Breast epithelium (tissue), 4 donors: ENCODE measurements at regions of chr10 and their contacts with region 1.

Region 1: DNA sequence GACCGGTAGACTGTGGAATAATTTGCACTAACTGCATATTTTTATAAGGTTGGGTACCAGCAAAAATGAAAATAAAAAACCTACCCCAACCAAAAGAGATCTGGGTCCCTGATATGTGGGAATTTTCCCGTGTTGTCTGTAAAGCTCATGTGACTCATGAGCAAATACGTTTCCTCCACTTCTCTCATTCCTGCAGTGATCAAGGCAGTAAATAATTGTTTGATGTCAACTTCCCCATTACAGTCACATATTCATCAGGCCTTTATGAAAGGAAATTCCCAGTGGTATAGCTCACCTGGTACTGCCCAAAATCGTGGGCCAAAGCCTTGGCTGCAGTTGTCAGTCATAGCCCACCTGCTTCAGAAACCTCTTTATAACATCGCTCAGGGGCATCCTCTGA is 166.0 kb upstream of the ANK3 start:
- DNase-seq: no peak
- H3K4me3 ChIP-seq: no peak overlapping the region
- H3K27ac ChIP-seq: no peak overlapping the region
- H3K4me1 ChIP-seq: no peaks in the 10 kb centered on the region
- H3K27me3 ChIP-seq: no peaks in the 10 kb centered on the region
- CTCF ChIP-seq: no peak
- POLR2A ChIP-seq: no peak

Region 2: GRCh38 chr10:59967069-59967468 is 588.6 kb before region 1 on chr10:
- intact Hi-C with region 1: no loop called
- DNase-seq: no peak
- H3K4me3 ChIP-seq: no peak overlapping the region
- H3K27ac ChIP-seq: peak overlapping the region in 1 of 2 donors; percentile 15
- H3K4me1 ChIP-seq: no peaks in the 10 kb centered on the region
- H3K27me3 ChIP-seq: no peaks in the 10 kb centered on the region
- CTCF ChIP-seq: no peak
- POLR2A ChIP-seq: no peak

Region 3: DNA sequence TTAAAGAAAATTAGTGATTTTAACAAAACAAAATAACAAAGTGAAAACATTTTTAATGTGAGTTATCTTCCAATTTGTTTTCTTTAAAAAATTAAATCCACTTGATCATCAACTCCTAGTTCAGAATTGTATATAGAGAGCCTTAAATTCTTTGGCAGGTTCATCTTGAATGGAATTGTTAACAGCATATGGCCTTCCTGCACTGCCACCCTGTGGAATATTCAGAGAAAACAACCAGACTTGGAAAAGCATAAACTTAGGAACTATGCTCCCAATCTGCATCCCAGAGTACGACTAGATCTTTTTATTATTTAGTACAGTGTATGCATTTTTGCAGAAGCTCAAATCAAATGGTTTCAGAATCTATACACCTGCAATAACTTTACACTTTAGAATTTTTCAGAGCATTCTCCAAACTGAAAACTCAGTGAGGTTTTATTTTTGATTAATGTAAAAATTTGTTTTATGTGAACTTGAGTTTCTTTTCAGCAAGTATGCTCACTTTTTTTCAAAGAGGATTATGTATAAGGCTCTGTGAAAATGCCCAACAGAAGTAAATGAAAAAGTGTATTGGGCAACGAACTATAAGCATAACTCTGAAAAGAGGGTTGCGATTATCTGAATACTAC is 121.2 kb before region 1 on chr10:
- intact Hi-C with region 1: no loop called
- DNase-seq: no peak
- H3K4me3 ChIP-seq: no peak overlapping the region
- H3K27ac ChIP-seq: no peak overlapping the region
- H3K4me1 ChIP-seq: no peaks in the 10 kb centered on the region
- H3K27me3 ChIP-seq: no peaks in the 10 kb centered on the region
- CTCF ChIP-seq: peak in 2 of 3 donors; percentile 63 to 81
- POLR2A ChIP-seq: no peak

Region 4: GRCh38 chr10:60566096-60566495 is 10.4 kb after region 1 on chr10:
- intact Hi-C with region 1: loop called (anchors 1 kb)
- DNase-seq: no peak
- H3K4me3 ChIP-seq: no peak overlapping the region
- H3K27ac ChIP-seq: no peak overlapping the region
- H3K4me1 ChIP-seq: no peaks in the 10 kb centered on the region
- H3K27me3 ChIP-seq: no peaks in the 10 kb centered on the region
- CTCF ChIP-seq: no peak
- POLR2A ChIP-seq: no peak

Region 5: DNA sequence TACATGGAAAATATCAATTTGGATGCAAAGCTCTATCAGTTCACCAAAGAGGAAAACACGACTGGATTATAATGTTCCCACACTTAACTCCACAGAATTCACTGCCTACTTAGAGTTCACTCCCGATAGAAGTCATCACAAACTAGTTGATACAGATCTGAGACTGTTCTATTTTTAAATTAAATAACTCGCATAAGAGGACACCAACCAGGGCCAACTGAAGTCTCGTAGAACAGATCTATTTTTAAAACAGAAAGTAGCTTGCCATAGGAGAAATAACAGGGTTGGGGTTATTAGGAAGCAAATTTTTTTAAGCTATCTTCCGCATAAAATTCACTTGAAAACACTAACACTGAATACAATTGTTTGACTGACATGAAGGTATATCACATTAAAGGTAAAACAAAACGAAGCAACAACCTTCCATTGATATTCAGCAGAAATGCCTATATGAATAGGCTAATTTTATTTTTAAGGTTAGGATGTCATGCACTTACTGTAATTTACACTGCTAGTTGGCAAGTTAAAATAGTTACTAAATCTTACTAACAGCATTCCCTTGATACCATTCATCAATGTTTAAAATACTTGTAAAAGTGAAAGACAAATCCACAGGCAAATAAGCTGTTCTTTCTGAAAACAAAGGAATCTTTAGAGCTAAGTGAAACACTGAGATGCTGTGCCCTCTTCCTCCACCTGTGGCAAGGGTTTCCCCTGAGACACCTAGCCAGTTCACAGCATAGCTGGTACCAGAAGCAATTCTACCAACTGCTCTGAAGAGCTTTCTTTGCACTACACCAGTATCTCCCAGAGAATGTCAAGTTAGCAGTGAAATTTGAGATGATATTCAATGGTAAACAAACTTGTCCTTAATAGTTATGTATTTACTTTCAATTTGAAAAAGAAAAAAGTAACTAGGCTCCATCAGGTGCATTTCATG is 20.7 kb after region 1 on chr10:
- intact Hi-C with region 1: no loop called
- DNase-seq: no peak
- H3K4me3 ChIP-seq: peak overlapping the region in 1 of 3 donors; percentile 37
- H3K27ac ChIP-seq: peak overlapping the region in 1 of 2 donors; percentile 8
- H3K4me1 ChIP-seq: no peaks in the 10 kb centered on the region
- H3K27me3 ChIP-seq: no peaks in the 10 kb centered on the region
- CTCF ChIP-seq: no peak
- POLR2A ChIP-seq: no peak